ENCODE measurements at regions of chr3 and their contacts with region 1.

Region 1: GRCh38 chr3:12841149-12841970 is at the start of gene RPL32:
- DNase-seq: peak; percentile 81 to 86
- H3K4me3 ChIP-seq: peak within 1 kb of the TSS; percentile 88 to 100 (median 94)
- H3K27ac ChIP-seq: peak within 1 kb of the TSS; percentile 93
- H3K4me1 ChIP-seq: peaks cover 5 to 14% (median 10%) of the 10 kb centered on the region in 4 experiments
- H3K27me3 ChIP-seq: no peaks in the 10 kb centered on the region
- CTCF ChIP-seq: peak in 2 of 3 experiments; percentile 68 to 84; a peak in 3 of 4 replicates
- EP300 ChIP-seq: no peak
- POLR2A ChIP-seq: peak; percentile 95 to 97
- RAD21 ChIP-seq: peak in 1 of 2 experiments; percentile 26; a peak in 1 of 4 replicates
- total RNA-seq, gene RPL32: 1,954 and 2,043 TPM in 2 replicates

Region 2: DNA sequence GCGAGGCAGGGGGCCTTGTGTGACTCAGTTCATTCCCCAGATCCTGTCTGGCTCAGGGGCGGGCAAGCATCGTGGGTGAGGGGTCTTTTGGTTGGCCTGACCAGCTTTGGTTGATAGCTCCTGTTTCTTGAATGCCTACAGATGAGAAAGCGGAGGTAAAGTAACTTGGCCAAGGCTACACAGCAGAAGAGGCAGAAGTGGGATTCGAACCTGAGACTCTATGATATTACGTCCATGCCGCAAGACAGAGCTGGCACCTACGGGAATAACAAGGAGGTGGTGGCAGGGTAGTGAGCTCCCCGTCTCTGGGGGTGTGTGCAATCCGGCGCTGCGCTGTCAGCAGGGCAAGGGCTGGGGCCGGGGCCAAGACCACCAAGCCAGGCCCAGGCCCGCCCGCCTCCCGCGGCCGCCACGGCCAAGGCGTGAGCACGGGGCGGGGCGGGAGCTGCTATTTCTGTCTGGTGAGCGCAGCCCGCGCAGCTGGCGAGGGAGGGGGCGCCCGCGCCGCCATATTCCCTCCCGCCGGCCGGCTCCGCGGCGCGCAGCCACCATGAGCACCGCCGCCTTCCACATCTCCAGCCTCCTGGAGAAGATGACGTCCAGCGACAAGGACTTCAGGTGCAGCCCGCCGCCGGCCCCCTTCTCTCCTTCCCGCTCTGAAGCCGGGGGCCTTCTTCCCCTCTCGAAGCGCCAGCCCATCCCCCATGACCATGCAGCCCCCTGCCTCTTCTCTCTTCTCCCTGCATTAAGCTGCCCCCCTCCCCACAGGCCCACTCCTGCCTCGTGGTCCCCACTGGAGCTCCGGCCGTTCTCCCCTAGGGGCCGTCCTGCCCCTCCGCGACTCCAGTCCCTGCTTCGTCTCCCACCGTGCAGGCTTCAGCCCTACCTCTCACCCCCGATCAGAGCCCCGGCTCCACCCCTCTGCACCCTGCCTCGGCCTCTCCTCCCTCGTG is 44.9 kb before region 1 on chr3 and contains the start of gene CAND2:
- CTCF ChIA-PET with region 1: interaction called, 3 read pairs
- POLR2A ChIA-PET with region 1: interaction called, 33 read pairs
- DNase-seq: peak in 1 of 2 experiments; percentile 71
- H3K4me3 ChIP-seq: peak within 1 kb of the TSS; percentile 69 to 88 (median 85)
- H3K27ac ChIP-seq: no peak within 1 kb of the TSS
- H3K4me1 ChIP-seq: peaks cover 0 to 10% (median 2%) of the 10 kb centered on the region in 4 experiments; a peak in 4 of 7 replicates
- H3K27me3 ChIP-seq: no peaks in the 10 kb centered on the region
- CTCF ChIP-seq: no peak
- EP300 ChIP-seq: no peak
- POLR2A ChIP-seq: peak in 1 of 2 experiments; percentile 38; a peak in 1 of 3 replicates
- RAD21 ChIP-seq: no peak; a peak in 1 of 4 replicates
- total RNA-seq, gene CAND2: 8.7 and 11.2 TPM in 2 replicates

Region 3: GRCh38 chr3:12830785-12831156 is 10.6 kb before region 1 on chr3:
- CTCF ChIA-PET with region 1: interaction called, 21 read pairs
- POLR2A ChIA-PET with region 1: interaction called, 661 read pairs
- DNase-seq: no peak
- H3K4me3 ChIP-seq: no peak overlapping the region
- H3K27ac ChIP-seq: no peak overlapping the region
- H3K4me1 ChIP-seq: peaks cover 0 to 10% (median 5%) of the 10 kb centered on the region in 4 experiments; a peak in 4 of 7 replicates
- H3K27me3 ChIP-seq: no peaks in the 10 kb centered on the region
- CTCF ChIP-seq: peak in 1 of 3 experiments; percentile 29; a peak in 1 of 4 replicates
- EP300 ChIP-seq: no peak
- POLR2A ChIP-seq: no peak
- RAD21 ChIP-seq: no peak

Region 4: DNA sequence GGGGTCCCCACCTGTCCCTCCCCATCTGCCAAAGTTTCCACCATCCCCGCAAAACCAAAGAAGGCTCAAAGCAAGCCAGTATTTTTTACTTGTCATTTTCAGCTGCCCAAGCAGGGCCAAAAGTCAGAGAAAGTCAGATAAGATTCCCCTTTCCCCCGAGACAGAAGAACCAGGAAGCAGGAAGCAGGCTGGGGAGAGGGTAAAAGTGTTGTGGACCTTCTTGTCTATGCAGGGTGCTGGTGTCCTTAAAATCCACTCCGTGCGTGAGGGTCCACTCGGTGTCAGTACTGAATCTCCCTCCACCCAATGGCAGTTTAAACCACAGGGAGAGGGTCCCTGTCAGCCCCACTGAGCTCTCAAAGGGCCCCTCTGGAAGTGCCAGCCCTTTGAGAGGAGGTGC is 20.3 kb after region 1 on chr3:
- CTCF ChIA-PET with region 1: interaction called, 16 read pairs
- POLR2A ChIA-PET with region 1: interaction called, 314 read pairs
- DNase-seq: no peak
- H3K4me3 ChIP-seq: no peak overlapping the region
- H3K27ac ChIP-seq: no peak overlapping the region
- H3K4me1 ChIP-seq: peaks cover 0 to 3% (median 0%) of the 10 kb centered on the region in 4 experiments; a peak in 2 of 7 replicates
- H3K27me3 ChIP-seq: peaks cover 0 to 4% (median 0%) of the 10 kb centered on the region in 4 experiments; a peak in 1 of 7 replicates
- CTCF ChIP-seq: no peak
- EP300 ChIP-seq: no peak
- POLR2A ChIP-seq: no peak
- RAD21 ChIP-seq: no peak

Region 5: DNA sequence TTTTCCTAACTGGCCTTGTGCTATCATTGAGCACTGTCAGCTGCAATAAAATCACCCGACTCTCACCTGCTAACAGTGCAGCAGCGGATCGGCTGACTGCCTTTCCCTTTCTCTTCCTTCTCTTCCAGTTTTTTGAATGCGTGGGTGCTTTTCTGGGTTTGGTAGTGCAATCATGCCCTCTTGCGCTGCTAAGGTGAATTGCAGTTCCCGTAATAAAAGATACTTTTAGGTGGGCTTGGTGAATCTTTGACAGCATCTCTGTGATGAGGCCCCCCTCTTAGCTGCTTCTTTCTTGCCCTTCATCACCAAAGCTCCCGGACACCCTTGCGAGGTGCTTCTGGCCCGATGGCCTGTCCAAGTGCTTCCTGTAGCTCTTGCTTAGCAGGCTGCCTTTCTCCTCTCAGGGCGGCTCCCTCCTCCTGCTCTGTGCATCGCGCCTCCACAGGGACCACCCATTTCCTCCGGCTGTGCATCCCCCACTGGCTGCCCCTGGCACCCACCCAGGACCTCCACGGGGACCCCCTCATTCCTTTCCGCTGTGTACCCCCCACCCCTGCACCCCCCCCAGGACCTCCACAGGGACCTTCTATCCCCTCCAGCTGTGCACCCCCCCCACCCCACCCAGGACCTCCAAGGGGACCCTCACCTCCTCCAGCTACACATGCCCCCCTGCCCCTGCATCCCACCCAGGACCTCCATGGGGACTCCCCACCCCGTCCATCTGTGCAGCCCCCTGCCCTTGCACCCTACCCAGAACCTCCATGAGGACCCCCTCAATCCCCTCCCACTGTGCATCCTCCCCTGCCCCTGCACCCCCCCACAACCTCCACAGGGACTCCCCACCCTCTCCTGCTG is 50.9 kb after region 1 on chr3:
- CTCF ChIA-PET with region 1: interaction called, 15 read pairs
- POLR2A ChIA-PET with region 1: interaction called, 24 read pairs
- DNase-seq: peak in 1 of 2 experiments; percentile 70
- H3K4me3 ChIP-seq: no peak overlapping the region
- H3K27ac ChIP-seq: no peak overlapping the region
- H3K4me1 ChIP-seq: peaks cover 0 to 2% (median 0%) of the 10 kb centered on the region in 4 experiments; a peak in 2 of 7 replicates
- H3K27me3 ChIP-seq: peaks cover 0 to 9% (median 1%) of the 10 kb centered on the region in 4 experiments; a peak in 4 of 7 replicates
- CTCF ChIP-seq: peak; percentile 32 to 92 (median 89)
- EP300 ChIP-seq: no peak
- POLR2A ChIP-seq: no peak
- RAD21 ChIP-seq: peak; percentile 98 to 99

Region 6: GRCh38 chr3:13277860-13278531 is 436.6 kb after region 1 on chr3:
- CTCF ChIA-PET with region 1: no interaction called
- POLR2A ChIA-PET with region 1: no interaction called
- DNase-seq: no peak
- H3K4me3 ChIP-seq: no peak overlapping the region
- H3K27ac ChIP-seq: no peak overlapping the region
- H3K4me1 ChIP-seq: peaks cover 0 to 13% (median 7%) of the 10 kb centered on the region in 4 experiments; a peak in 5 of 7 replicates
- H3K27me3 ChIP-seq: peaks cover 7 to 19% (median 14%) of the 10 kb centered on the region in 4 experiments; a peak in 6 of 7 replicates
- CTCF ChIP-seq: no peak
- EP300 ChIP-seq: no peak
- POLR2A ChIP-seq: no peak
- RAD21 ChIP-seq: no peak